GM18951 (cell line): ENCODE measurements at regions of chr2 and their contacts with region 1.

Region 1: DNA sequence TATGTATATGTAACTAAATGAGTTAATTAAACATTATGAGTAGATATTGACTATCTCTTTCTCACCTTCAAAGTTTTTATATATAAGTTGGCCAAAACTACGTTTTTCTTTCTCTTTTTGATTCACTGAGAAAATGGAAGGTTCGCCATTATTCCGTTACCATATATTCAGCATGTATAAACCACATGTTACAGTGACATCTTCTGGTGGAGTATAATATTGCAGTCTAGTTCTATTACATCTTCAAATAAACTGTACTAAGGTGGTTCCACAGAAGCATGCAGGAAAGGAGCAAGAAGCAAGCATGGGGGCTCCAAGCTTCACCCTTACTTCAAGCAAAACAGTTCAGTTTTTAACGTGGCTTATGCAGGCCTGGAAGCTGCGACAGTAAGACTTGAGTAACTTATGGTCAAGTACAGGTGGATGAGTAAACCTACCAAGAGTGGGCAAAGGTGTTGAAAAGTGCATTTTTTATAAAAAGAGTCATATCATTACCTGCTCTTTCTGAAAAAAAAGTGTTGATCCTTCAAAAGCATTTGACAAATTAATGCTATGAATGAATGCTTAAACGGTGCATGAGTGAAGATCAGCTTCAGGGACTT is 129.8 kb upstream of the RAB6C start:
- POLR2A ChIP-seq: no peak

Region 2: DNA sequence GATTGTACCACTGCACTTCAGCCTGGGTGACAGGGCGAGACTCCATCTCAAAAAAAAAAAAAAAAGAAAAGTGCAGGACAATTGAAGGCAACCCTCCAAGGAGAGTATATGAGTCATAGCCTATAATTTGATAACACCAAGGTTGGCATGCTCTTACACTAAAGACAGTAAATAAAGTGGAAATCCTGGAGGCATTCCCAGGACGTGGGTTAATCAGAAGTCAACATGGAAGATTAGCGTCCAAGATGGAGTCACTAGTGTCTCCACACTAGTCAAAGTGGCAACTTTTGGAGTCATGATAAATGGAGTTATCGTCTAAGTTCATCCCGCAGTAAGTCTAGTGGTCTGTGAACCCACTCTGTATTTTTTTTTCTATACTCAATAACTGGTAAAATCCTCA is 1779.9 kb before region 1 on chr2:
- in situ Hi-C with region 1: loop called (anchors 25 kb)
- POLR2A ChIP-seq: no peak

Region 3: DNA sequence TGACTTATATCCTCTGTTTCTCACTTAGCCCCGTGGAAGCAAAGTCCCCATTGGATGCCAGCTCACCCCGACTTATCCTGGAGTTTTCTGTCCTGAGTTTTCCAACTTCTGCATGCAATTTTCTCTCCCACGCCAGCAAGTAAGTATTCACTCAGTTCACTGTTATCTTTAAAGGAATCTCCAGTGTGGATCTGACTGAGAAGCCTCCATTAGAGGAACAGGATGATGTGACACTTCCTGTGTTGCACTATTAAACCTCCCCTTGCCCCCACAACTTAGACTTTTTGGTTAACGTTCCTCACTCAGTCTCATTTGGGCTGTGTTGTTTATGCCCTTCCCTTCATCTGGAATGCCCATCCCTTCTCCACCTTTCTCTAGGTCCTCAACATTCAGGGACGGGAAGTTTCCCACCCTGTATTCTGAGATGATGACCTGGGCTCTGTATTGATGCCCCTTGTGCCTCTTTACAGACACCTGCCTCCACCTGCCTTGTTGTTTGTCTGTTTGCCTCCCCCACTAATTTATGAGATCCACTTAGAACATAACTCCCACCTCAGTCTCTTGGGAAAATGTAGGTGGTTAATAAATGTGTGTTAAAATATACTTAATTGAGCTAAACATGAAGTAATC is 406.3 kb before region 1 on chr2:
- in situ Hi-C with region 1: no loop called
- POLR2A ChIP-seq: no peak

Region 4: DNA sequence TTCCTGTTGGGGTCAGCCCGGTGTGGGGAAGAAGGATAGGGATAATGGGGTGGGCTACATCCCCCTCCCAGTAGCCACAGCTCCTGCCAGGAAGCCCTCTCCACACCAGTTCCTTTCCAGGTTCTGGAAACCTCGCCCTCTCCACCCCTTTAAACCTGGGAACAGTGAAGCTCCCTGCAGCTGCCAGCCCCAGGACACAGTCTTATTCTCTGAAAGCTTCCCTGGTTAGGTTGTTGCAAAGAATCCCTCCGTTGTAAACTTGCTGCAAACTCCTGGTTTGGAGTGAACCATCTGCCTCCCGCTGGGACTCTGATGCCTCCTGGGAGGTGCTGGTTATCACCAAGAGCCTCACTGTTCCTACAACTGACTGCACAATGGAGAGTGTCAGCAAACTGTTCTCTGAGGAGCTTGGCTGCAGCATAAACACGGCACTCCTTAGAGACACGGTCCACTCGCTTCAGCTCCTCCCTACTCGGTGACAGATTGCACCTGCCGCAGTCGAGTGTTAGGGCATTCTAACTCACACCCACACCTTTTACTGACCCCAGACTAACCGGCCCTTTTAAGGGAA is 132.0 kb before region 1 on chr2:
- in situ Hi-C with region 1: no loop called
- POLR2A ChIP-seq: no peak